PC-3 (cell line): ENCODE measurements at regions of chr4 and their contacts with region 1.

Region 1: DNA sequence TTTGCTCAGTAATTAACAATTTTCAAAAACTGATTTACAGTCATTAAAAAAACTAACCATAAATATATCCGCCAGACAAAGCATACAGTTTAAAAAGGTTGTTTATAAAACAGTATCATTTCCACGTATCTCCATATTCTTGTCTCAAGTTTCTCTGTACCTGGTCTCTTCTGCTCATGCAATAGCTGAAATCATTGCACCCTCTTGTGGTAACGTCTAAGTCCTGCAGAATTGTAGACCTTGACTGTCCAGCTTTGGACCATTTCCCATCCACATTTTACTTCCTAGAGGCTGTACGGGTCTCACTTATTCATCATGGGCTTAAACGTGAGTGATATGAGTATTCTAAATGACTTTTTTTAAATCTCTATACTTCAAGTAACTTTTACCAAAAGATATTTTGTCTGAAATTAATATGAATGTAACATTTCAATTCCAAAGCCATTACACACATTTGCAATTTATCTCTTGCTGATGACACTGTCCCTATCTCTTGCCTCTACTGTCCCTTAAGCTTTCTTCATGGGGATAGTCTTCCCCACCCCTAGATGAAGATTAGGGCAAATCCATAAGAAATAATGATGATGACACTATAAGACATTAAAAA is 118.5 kb downstream of the BTC start:
- DNase-seq: peak; percentile 82
- ATAC-seq: peak; percentile 81
- H3K4me3 ChIP-seq: no peak overlapping the region
- H3K27ac ChIP-seq: no peak overlapping the region
- H3K4me1 ChIP-seq: peaks cover 12% of the 10 kb centered on the region
- H3K27me3 ChIP-seq: no peaks in the 10 kb centered on the region
- CTCF ChIP-seq: peak; percentile 86

Region 2: GRCh38 chr4:74189331-74190043 is 486.3 kb before region 1 on chr4:
- CTCF ChIA-PET with region 1: interaction called, 4 read pairs
- POLR2A ChIA-PET with region 1: no interaction called
- intact Hi-C with region 1: loop called (anchors 1 kb)
- DNase-seq: peak; percentile 79
- ATAC-seq: peak; percentile 65
- H3K4me3 ChIP-seq: no peak overlapping the region
- H3K27ac ChIP-seq: peak overlapping the region; percentile 17
- H3K4me1 ChIP-seq: peaks cover 19% of the 10 kb centered on the region
- H3K27me3 ChIP-seq: no peaks in the 10 kb centered on the region
- CTCF ChIP-seq: peak; percentile 91

Region 3: DNA sequence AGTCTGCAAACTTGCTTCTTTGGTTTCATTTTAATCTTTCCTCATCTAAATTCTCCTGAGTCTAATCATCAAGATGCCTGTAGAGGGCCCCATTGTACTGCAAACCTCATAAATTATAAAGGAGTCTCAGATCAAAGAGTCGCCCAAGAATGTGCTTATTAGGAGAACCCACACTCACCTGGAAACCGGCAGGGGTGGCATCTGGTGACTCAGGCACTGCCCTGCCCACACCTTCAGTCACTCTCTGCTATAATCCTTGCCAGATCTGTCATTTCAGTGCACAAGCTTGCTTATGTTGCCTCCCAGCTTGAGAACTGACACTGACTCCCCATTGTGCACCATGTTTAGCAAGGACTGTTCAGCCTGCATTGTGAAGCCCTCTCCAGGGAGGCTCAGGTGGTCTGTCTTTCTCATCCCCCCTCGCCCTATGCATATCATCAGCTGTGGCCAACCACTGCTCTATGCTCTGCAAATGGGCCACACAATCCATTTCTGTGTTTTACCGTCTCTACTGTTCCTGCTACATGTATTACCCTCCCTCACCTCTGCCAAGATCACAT is 355.1 kb before region 1 on chr4:
- CTCF ChIA-PET with region 1: interaction called, 4 read pairs
- POLR2A ChIA-PET with region 1: interaction called, 3 read pairs
- intact Hi-C with region 1: loop called (anchors 1 kb)
- DNase-seq: peak; percentile 95
- ATAC-seq: peak; percentile 90
- H3K4me3 ChIP-seq: peak overlapping the region; percentile 15; the same call in 1 of the 2 replicates
- H3K27ac ChIP-seq: peak overlapping the region; percentile 95
- H3K4me1 ChIP-seq: peaks cover 28% of the 10 kb centered on the region
- H3K27me3 ChIP-seq: no peaks in the 10 kb centered on the region
- CTCF ChIP-seq: peak; percentile 78

Region 4: DNA sequence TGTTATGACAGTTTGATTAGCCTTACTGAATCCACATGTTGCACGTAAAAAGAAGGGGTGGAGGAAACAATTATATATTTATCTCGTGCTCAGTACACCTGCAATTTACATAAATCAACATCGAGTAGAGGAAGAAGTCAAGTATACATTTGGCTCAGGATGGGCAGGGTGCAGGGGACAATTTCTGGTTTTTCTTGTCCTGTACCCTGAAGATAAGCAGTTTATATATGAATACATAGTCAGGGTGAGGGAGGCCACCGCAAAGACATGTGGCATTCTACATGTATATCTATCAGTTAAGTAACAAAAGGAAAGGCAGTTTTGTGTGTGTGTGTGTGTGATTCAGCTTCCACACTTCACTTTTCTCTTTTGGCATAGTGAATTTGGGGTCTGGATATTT is 321.9 kb before region 1 on chr4:
- CTCF ChIA-PET with region 1: no interaction called
- POLR2A ChIA-PET with region 1: no interaction called
- intact Hi-C with region 1: no loop called
- DNase-seq: no peak
- ATAC-seq: no peak
- H3K4me3 ChIP-seq: no peak overlapping the region
- H3K27ac ChIP-seq: no peak overlapping the region
- H3K4me1 ChIP-seq: peaks cover 16% of the 10 kb centered on the region
- H3K27me3 ChIP-seq: no peaks in the 10 kb centered on the region
- CTCF ChIP-seq: no peak

Region 5: DNA sequence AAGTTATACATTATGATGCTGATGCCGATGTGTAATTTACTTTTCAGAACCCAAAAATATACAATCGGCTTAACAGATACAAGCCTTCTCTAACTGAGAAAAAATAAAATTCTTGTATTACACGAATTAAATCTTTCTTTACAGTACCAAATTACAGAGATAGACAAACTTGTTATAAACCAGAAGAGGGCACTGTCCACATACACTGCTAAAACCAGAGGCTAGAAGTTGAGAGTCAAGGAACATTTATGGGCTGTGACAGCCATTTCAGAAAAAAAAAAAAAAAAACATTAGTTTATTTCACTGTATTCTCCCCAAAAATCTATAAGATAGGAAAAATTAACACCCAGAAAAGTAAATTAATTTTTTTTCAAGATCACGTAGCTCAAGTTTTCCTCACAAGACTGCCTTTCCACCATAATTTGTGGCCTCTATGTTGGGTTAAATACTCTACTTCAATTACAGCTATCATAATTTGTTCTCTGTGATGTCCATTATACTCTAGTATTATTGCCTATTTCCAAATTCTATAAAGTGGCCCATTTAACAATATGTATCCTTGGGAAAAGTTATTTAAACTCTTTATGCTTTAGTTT is 298.8 kb before region 1 on chr4:
- CTCF ChIA-PET with region 1: interaction called, 3 read pairs
- POLR2A ChIA-PET with region 1: no interaction called
- intact Hi-C with region 1: loop called (anchors 1 kb)
- DNase-seq: peak; percentile 60
- ATAC-seq: peak; percentile 14; the same call in 1 of the 2 replicates
- H3K4me3 ChIP-seq: peak overlapping the region; percentile 56
- H3K27ac ChIP-seq: peak overlapping the region; percentile 100
- H3K4me1 ChIP-seq: peaks cover 40% of the 10 kb centered on the region
- H3K27me3 ChIP-seq: no peaks in the 10 kb centered on the region
- CTCF ChIP-seq: peak; percentile 71

Region 6: DNA sequence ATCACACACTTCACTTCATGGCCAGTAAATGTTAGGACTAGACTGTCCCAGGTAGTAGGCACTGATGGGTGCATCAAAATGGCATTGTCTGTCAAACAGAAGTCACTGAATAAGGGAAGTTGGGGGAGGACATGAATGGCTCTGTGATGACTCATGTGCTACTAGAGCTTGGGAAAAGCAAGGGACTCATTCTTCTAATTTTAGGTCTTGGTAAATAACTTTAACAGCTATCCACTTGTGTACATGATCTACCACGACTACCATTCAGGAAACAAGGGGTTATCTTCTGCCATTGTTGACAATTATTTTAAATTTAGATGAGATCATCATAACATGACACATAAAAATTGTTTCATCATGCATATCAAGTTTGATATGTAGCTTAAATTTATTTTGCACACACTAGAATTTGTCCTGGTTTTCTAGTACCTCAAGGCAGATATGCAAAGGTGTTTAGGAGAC is 224.5 kb before region 1 on chr4:
- CTCF ChIA-PET with region 1: interaction called, 3 read pairs
- POLR2A ChIA-PET with region 1: no interaction called
- intact Hi-C with region 1: loop called (anchors 2 kb)
- DNase-seq: peak; percentile 85
- ATAC-seq: peak; percentile 37
- H3K4me3 ChIP-seq: peak overlapping the region; percentile 76; the same call in 1 of the 2 replicates
- H3K27ac ChIP-seq: peak overlapping the region; percentile 80
- H3K4me1 ChIP-seq: peaks cover 88% of the 10 kb centered on the region
- H3K27me3 ChIP-seq: no peaks in the 10 kb centered on the region
- CTCF ChIP-seq: no peak

Region 7: DNA sequence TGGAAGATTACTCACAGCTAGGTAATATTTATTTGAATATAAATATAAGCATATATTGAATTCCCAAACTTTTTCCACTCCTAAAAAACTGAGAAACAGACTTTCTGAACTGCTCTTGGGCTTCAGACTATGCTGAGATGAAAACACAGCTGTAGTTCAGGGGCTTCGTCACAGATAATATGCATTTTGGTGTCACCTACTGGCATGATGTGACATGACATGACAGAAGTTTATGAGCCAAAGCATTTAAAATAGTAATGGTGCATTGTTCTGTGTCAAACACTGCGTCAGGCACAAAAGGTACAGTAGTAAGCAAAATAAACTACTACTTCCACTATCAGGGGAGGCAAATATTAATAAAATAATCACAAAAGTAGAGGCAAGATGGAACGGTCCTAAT is 52.7 kb before region 1 on chr4:
- CTCF ChIA-PET with region 1: interaction called, 4 read pairs
- POLR2A ChIA-PET with region 1: no interaction called
- intact Hi-C with region 1: loop called (anchors 1 kb)
- DNase-seq: peak; percentile 77
- ATAC-seq: peak; percentile 6; the same call in 1 of the 2 replicates
- H3K4me3 ChIP-seq: no peak overlapping the region
- H3K27ac ChIP-seq: peak overlapping the region; percentile 100
- H3K4me1 ChIP-seq: peaks cover 92% of the 10 kb centered on the region
- H3K27me3 ChIP-seq: no peaks in the 10 kb centered on the region
- CTCF ChIP-seq: peak; percentile 78

Region 8: DNA sequence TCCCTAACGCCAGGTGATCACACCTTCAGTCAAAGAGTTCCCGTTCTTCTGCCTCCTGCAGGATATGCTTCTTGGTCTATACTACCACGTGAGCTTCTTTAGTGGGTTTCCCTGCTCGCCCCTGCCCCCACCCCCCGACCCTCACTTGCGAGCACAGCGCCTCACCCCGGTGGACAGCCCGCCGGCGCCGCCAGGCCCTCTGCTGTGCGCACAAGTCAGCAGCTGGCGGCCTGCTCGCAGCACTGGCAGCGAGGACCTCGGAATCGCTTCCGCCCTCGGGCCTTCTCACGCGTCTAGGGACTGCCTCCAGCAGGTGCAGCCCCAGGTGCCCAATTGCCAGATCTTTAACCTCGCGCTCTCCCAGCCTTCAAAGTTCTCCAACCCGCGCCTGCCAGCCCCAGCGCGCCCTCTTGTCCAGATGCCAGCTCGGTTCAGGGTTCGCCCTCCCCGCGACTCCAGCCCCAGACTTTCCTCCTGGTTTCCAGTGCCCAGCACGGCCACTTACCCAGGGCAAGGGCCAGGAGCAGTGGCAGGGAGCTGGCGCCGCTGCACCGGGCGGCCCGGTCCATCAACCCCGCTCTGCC is 118.1 kb after region 1 on chr4:
- CTCF ChIA-PET with region 1: no interaction called
- POLR2A ChIA-PET with region 1: no interaction called
- intact Hi-C with region 1: loop called (anchors 1 kb)
- DNase-seq: peak; percentile 63
- ATAC-seq: peak; percentile 82
- H3K4me3 ChIP-seq: peak overlapping the region; percentile 86
- H3K27ac ChIP-seq: peak overlapping the region; percentile 72
- H3K4me1 ChIP-seq: peaks cover 18% of the 10 kb centered on the region; the same call in 1 of the 2 replicates
- H3K27me3 ChIP-seq: no peaks in the 10 kb centered on the region
- CTCF ChIP-seq: peak; percentile 72